HEK293T (cell line): ENCODE measurements at regions of chr3 and their contacts with region 1.

Region 1: DNA sequence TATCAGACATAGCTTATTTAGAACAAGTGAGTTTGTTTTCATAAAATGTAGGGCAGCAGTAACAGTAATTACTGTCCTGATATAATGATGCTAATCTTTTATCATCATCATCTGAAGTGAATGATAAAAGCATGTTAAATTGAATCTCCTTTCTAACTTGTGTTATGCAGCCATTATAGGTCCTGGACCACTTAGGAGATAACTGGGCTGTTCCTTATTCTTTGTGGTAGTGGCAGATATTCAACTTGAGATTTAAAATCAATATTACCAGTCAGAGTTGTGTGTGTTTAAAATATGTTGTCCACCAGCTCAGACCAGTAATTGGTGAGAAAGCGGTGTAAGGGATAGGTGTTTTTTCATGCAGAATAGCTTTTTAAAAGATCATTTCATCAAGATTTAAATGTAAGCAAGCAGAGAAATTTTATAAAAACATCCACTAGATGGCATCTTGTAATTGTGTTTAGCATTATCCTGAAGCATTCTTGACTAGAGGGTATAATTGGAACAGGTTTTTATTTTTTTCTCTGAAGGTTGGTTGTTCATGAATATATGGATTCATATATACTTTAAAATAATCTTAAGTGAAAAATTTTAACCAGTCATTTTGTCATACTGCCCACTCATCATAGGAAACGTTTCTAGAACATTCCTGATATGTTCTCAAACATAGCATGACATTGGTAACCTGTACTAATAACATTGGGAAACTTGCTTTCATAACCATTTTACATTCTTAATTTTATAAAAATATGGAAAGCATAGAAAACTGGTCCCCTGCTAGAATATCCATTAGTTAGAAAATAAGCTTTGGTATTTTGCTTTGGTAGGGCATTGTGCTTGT is 153.9 kb downstream of the BBX start:
- DNase-seq: peak; percentile 22

Region 2: GRCh38 chr3:107740992-107741896 is 64.6 kb after region 1 on chr3:
- CTCF ChIA-PET with region 1: interaction called, 35 read pairs
- POLR2A ChIA-PET with region 1: no interaction called
- DNase-seq: no peak